ENCODE measurements at regions of chr17 and their contacts with region 1.

Region 1: DNA sequence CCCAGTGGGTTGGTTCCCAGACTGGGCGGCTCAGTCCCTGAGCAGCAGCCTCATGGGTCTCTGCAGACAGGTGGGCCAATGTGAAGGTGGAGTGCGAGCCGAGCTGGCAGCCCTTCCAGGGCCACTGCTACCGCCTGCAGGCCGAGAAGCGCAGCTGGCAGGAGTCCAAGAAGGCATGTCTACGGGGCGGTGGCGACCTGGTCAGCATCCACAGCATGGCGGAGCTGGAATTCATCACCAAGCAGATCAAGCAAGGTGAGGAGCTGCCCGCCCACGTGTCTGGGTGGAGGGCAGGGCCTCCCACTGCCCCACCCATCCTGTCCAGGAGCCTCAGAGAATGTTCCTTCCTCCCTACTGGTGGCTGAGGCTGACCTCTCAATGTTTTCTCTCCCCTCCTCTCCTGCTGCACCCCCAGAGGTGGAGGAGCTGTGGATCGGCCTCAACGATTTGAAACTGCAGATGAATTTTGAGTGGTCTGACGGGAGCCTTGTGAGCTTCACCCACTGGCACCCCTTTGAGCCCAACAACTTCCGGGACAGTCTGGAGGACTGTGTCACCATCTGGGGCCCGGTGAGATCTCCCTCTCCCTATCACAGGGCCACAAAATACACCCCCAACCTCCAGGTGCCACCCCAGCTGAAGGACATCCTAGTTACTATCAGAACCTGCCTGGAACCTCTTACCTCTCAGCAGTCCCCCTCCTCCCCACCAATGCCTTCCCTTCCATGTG is 44.3 kb downstream of the MRC2 start:
- DNase-seq: no peak

Region 2: GRCh38 chr17:62652251-62653001 is 19.3 kb before region 1 on chr17:
- intact Hi-C with region 1: no loop called
- DNase-seq: no peak

Region 3: DNA sequence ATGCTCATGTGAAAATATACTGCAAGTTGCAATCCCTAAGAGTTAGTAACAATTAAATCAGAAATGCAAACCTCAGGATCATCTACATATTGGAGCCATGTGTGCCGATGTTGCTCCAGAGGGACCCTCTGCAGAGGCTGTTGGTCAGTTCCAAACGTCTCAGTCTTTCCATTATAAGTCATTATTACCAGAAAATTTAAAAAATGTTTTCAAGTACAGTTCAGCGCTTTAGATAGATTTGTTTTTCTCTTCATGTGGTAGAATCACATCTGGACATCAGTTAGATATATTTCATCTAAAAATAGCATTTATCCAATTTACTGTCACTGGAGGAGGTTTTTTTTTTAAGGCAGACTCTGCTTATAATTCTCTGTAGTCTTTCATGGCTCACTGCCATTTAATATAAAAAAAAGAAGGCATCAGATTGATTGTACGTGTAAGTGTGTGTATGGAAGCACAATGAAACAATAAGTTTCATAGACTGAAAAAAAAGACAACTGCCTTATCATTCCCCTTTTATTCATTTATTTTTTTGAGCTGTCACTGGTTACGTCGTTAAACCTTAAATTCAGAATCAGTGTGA is 182.4 kb after region 1 on chr17:
- intact Hi-C with region 1: no loop called
- DNase-seq: no peak

Region 4: GRCh38 chr17:63406689-63407330 is 735.1 kb after region 1 on chr17:
- intact Hi-C with region 1: loop called (anchors 5 kb)
- DNase-seq: no peak

Measured in cardiac septum (tissue), 1 donor.